GM18951 (cell line): ENCODE measurements at regions of chr22 and their contacts with region 1.

Region 1: DNA sequence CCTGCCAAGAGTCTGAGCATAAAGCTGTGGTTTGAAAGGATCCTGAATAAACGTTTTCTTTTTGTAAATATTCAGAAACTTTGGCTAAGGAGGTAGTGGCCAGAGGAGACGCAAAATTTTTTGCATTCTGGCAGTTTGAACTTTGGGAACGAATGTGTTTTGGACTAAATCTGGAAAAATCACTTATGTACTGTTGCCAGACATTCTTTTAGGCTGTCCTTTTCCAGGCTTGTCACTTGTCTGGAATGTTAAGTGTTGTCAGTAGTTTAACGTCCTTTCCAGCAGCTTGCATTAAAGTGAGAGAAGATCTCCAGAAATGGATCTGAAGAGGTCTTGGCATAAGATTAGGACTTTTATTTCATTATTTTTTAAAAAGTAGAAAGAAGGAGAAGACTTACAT is 18.5 kb downstream of the SPECC1L start:
- POLR2A ChIP-seq: no peak

Region 2: DNA sequence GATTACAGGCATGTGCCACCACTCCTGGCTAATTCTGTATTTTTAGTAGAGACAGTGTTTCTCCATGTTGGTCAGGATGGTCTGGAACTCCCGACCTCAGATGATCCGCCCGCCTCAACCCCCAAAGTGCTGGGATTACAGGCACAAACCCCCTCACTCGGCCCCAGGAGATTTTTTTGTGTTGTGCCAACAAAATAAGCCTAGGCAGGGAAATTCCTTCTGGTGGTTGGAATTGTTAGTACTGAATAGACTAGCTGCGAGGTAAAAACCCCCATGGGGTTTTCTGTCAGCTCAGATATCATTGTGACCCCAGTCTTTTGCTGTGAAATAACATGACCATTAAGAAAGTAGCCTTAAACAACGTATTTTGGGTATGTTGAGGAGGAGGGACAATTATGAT is 963.9 kb before region 1 on chr22:
- in situ Hi-C with region 1: loop called (anchors 25 kb)
- POLR2A ChIP-seq: no peak

Region 3: GRCh38 chr22:24091551-24092420 is 197.3 kb before region 1 on chr22:
- in situ Hi-C with region 1: no loop called
- POLR2A ChIP-seq: no peak

Region 4: DNA sequence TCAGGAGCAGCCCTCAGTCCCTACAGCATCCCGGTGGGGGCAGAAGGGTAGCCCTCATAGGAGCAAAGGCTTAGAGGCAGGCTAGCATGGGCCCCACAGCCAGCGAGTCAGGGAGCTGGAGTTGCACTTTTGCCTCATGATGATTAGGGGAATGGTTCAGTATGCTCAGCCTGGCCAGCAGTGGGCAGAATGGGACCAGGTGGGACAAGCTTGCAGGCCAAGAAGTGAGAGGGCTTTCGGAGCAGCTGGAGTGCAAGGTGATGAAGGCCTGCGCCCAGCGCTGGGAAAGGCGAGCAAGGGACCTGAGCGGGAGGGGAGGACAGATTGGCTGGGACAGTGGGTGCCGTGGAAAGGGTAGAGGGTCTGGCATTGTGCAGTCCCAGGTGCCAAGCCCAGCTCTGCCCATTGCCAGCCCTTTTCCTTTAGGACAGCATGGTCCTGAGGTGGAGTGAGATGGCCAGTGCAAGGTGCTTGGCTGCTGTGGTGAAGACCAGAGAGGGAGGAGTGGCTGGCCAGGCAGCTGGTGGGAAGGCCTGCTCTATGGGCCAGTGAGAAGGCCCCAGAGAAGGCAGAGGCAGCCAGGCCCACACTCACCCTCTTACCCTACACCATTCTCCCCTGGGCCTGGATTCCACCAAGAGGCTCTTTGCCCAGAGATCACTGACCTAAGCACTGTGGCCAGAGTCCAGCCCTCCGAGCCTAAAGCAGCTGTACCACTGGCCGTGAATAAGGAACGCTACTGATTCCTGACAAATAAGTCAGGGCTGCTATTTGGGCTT is 155.7 kb before region 1 on chr22:
- in situ Hi-C with region 1: no loop called
- POLR2A ChIP-seq: no peak

Region 5: DNA sequence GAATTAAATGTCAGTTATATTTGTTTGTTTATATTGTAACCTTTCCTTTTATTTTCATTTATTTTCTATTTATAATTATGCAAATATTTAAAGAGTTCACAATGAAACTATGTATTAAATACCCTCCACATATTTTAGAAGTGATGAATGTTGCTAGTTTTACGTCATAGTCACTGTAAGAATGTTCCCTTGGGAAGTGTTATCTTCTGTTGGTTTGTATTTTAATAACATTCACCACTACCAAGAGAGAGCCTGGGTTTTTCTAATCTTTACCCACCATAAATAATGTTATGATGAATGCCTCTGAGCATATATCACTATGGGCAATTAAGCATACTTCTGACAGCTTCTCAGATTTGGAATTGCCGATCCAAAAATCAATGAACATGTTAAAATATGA is 394.6 kb after region 1 on chr22:
- in situ Hi-C with region 1: loop called (anchors 10 kb)
- POLR2A ChIP-seq: no peak